WTC11 (cell line): ENCODE measurements at regions of chr20 and their contacts with region 1.

Region 1: DNA sequence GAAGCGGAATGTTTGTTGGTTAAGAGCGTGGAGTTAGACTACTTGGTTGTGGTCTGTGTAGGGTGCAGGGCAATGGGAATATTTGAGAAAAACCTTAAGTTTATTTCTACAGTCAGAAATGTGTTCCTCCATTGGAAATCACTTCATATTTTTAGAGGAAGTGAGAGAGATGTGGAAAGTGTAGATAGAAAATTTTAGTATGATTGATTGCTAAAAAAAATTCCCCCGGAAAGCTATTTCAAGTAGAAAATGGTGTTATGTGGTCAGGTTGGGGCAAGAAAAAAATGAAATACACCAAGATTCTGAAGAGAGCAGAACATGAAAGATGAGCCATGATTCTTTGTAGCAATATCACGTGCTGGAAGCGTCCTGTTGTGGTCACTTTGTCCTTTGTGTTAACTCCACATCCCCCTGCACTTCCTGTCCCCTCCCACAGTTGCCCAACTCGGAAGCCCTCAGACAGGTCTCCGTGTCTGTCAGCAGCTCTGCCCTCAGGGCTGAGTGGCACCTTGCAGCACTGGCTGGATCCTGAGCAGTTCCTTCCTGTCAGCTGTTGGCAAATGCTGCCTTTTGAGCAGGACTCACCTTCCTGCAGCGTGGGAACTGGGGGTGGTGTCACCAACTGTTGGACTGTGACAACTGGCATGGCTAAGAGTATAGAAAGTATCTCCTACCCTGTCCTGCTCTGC is 137.5 kb upstream of the SLC24A3 start:
- DNase-seq: no peak
- ATAC-seq: no peak
- H3K4me3 Mint-ChIP-seq: no peak overlapping the region
- H3K27ac Mint-ChIP-seq: no peak overlapping the region
- H3K4me1 Mint-ChIP-seq: peaks cover 21% of the 10 kb centered on the region
- H3K27me3 Mint-ChIP-seq: no peaks in the 10 kb centered on the region; the same call in 1 of the 2 replicates
- CTCF ChIP-seq: no peak

Region 2: DNA sequence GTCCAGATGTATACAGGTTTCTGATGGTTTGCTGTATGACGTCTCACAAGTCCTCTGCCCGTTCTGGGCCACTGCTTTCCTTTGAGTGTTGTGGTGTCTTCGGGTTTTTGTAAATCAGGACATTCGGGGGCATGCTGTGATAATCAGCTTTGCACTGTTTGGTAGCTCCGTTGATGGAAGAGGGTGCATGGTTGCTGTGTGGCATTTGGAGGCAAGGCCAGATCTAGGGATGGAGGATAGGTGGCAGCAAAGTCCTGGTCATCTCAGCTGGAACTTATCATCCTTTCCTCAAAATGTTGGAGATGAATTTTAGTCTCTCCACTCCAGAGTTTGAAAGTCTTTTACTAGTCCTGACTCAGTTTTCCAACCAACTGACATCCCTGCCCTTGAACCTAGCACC is 170.3 kb before region 1 on chr20:
- CTCF ChIA-PET with region 1: interaction called, 18 read pairs
- POLR2A ChIA-PET with region 1: no interaction called
- DNase-seq: peak; percentile 13
- ATAC-seq: peak; percentile 62; the same call in 1 of the 2 replicates
- H3K4me3 Mint-ChIP-seq: no peak overlapping the region
- H3K27ac Mint-ChIP-seq: no peak overlapping the region
- H3K4me1 Mint-ChIP-seq: peaks cover 37% of the 10 kb centered on the region
- H3K27me3 Mint-ChIP-seq: no peaks in the 10 kb centered on the region; the same call in 1 of the 2 replicates
- CTCF ChIP-seq: no peak

Region 3: GRCh38 chr20:19025430-19026120 is 49.4 kb before region 1 on chr20:
- CTCF ChIA-PET with region 1: interaction called, 10 read pairs
- POLR2A ChIA-PET with region 1: no interaction called
- DNase-seq: no peak
- ATAC-seq: no peak
- H3K4me3 Mint-ChIP-seq: no peak overlapping the region
- H3K27ac Mint-ChIP-seq: no peak overlapping the region
- H3K4me1 Mint-ChIP-seq: no peaks in the 10 kb centered on the region
- H3K27me3 Mint-ChIP-seq: peaks cover 3% of the 10 kb centered on the region; the same call in 1 of the 2 replicates
- CTCF ChIP-seq: no peak

Region 4: DNA sequence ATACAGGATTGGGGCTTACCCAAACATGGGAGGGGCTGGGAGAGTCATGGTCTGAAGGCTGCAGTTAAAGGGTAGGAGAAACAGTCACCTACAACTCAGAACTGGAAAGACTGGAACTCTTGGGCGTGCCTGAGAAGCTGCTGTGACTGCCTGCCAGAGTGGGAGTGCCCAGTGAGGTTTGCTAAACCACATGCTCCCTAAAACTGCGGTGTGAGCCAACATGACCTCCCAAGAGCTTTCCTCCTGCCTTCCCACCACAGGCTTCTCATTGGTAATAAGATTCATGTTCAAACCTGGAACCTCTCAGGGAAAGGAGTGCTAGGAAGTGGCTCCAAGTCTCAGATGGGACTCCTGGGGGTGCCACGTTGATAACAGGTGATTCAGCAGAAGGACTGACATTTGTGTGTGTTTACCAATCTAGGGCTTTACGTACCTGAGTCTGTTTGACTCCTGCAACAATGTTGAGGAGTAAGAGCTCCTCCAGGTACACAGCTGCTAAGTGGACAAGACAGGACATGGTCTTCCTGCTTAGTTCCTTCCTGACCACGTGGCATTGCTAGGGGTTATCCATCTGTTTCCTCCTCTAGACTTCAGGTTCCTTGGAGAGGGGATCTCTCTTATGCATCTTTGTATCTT is 27.2 kb before region 1 on chr20:
- CTCF ChIA-PET with region 1: no interaction called
- POLR2A ChIA-PET with region 1: no interaction called
- DNase-seq: no peak
- ATAC-seq: no peak
- H3K4me3 Mint-ChIP-seq: no peak overlapping the region
- H3K27ac Mint-ChIP-seq: no peak overlapping the region
- H3K4me1 Mint-ChIP-seq: peaks cover 11% of the 10 kb centered on the region
- H3K27me3 Mint-ChIP-seq: peaks cover 10% of the 10 kb centered on the region
- CTCF ChIP-seq: no peak

Region 5: GRCh38 chr20:19104186-19104585 is 29.2 kb after region 1 on chr20:
- CTCF ChIA-PET with region 1: interaction called, 15 read pairs
- POLR2A ChIA-PET with region 1: interaction called, 3 read pairs
- DNase-seq: no peak
- ATAC-seq: no peak
- H3K4me3 Mint-ChIP-seq: no peak overlapping the region
- H3K27ac Mint-ChIP-seq: no peak overlapping the region
- H3K4me1 Mint-ChIP-seq: peaks cover 6% of the 10 kb centered on the region; the same call in 1 of the 2 replicates
- H3K27me3 Mint-ChIP-seq: no peaks in the 10 kb centered on the region
- CTCF ChIP-seq: no peak

Region 6: DNA sequence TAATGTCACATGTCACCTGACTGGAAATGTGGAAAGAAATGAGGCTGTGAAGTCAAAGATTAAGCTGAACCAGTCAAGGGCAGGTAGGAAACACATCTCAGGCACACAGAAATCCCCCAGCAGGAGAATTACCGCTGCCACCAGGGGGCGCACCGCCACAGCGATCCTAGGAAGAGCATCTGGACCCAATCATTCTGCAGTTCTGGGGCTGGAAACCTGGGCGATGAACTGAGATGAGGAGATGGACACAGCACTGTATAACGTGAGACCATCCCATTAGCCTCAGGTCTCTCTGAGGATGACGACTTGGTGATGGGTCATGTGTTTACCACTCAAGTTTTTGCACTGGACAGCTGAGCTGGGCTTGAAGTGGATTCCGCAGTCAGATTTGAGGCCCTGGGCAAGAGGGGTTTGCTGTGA is 131.0 kb after region 1 on chr20:
- CTCF ChIA-PET with region 1: interaction called, 36 read pairs
- POLR2A ChIA-PET with region 1: no interaction called
- DNase-seq: peak; percentile 93
- ATAC-seq: peak; percentile 60
- H3K4me3 Mint-ChIP-seq: no peak overlapping the region
- H3K27ac Mint-ChIP-seq: no peak overlapping the region
- H3K4me1 Mint-ChIP-seq: peaks cover 55% of the 10 kb centered on the region
- H3K27me3 Mint-ChIP-seq: no peaks in the 10 kb centered on the region
- CTCF ChIP-seq: peak; percentile 93

Region 7: GRCh38 chr20:19661717-19662636 is 587.0 kb after region 1 on chr20:
- CTCF ChIA-PET with region 1: interaction called, 25 read pairs
- POLR2A ChIA-PET with region 1: no interaction called
- DNase-seq: peak; percentile 68
- ATAC-seq: peak; percentile 80
- H3K4me3 Mint-ChIP-seq: no peak overlapping the region
- H3K27ac Mint-ChIP-seq: no peak overlapping the region
- H3K4me1 Mint-ChIP-seq: peaks cover 20% of the 10 kb centered on the region
- H3K27me3 Mint-ChIP-seq: no peaks in the 10 kb centered on the region
- CTCF ChIP-seq: peak; percentile 95